ENCODE measurements at regions of chr11 and their contacts with region 1.

Region 1: GRCh38 chr11:116835791-116836631 is 1.4 kb downstream of the APOA1 start:
- DNase-seq: peak; percentile 95
- H3K4me3 Mint-ChIP-seq: peak overlapping the region; percentile 43
- H3K27ac Mint-ChIP-seq: no peak overlapping the region
- H3K4me1 Mint-ChIP-seq: no peaks in the 10 kb centered on the region
- H3K27me3 Mint-ChIP-seq: no peaks in the 10 kb centered on the region
- CTCF ChIP-seq: peak; percentile 67

Region 2: DNA sequence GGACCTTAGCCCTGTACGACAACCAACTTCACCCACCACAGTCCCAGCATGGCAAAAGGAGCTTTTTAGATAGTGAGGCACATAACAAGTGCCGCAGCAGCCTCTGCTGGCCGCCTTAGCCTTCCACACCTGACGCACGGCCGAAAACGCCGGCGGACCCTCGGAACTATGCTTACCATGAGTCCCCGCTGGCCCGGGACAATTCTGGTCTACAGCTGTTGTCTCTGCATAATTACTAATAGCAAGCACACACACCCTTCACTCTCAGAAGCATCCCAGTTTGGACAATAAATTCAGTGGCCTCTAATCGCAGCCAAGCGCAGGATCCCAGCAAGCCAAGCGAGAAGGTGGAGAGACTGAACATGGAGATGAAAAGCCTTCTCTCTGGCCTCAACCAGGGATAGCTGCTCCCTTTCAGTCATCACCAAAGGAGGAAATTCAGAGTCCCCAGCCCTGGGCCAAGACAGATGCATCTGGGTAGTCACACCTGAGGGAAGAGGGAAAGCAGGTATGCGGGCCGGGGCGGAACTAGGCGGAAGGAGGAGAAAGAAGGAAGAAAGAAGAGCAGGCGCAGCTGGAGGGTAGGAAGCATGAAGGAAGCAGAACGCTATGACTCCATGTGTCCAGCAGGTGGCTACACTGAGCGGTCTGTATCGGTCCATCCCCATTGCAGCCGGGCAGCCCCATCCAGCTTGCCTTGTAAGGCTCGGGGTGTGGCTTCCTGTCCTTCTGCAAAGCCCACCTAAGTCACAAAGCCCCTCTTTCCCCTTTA is 103.6 kb before region 1 on chr11:
- CTCF ChIA-PET with region 1: interaction called, 33 read pairs
- POLR2A ChIA-PET with region 1: interaction called, 3 read pairs
- intact Hi-C with region 1: loop called (anchors 2 kb)
- DNase-seq: peak; percentile 74
- H3K4me3 Mint-ChIP-seq: no peak overlapping the region
- H3K27ac Mint-ChIP-seq: no peak overlapping the region
- H3K4me1 Mint-ChIP-seq: peaks cover 7% of the 10 kb centered on the region
- H3K27me3 Mint-ChIP-seq: no peaks in the 10 kb centered on the region
- CTCF ChIP-seq: peak; percentile 87

Region 3: GRCh38 chr11:116742104-116742503 is 93.9 kb before region 1 on chr11:
- CTCF ChIA-PET with region 1: interaction called, 11 read pairs
- POLR2A ChIA-PET with region 1: no interaction called
- intact Hi-C with region 1: no loop called
- DNase-seq: no peak
- H3K4me3 Mint-ChIP-seq: no peak overlapping the region
- H3K27ac Mint-ChIP-seq: no peak overlapping the region
- H3K4me1 Mint-ChIP-seq: no peaks in the 10 kb centered on the region
- H3K27me3 Mint-ChIP-seq: no peaks in the 10 kb centered on the region
- CTCF ChIP-seq: no peak

Region 4: GRCh38 chr11:116772443-116773202 is 63.4 kb before region 1 on chr11 and contains the start of gene BUD13:
- CTCF ChIA-PET with region 1: interaction called, 12 read pairs
- POLR2A ChIA-PET with region 1: interaction called, 10 read pairs
- intact Hi-C with region 1: no loop called
- DNase-seq: peak; percentile 86
- H3K4me3 Mint-ChIP-seq: peak within 1 kb of the TSS; percentile 97
- H3K27ac Mint-ChIP-seq: peak within 1 kb of the TSS; percentile 98
- H3K4me1 Mint-ChIP-seq: peaks cover 25% of the 10 kb centered on the region
- H3K27me3 Mint-ChIP-seq: no peaks in the 10 kb centered on the region
- CTCF ChIP-seq: no peak
- total RNA-seq, gene BUD13: 11.8 and 15.1 TPM in 2 replicates

Region 5: DNA sequence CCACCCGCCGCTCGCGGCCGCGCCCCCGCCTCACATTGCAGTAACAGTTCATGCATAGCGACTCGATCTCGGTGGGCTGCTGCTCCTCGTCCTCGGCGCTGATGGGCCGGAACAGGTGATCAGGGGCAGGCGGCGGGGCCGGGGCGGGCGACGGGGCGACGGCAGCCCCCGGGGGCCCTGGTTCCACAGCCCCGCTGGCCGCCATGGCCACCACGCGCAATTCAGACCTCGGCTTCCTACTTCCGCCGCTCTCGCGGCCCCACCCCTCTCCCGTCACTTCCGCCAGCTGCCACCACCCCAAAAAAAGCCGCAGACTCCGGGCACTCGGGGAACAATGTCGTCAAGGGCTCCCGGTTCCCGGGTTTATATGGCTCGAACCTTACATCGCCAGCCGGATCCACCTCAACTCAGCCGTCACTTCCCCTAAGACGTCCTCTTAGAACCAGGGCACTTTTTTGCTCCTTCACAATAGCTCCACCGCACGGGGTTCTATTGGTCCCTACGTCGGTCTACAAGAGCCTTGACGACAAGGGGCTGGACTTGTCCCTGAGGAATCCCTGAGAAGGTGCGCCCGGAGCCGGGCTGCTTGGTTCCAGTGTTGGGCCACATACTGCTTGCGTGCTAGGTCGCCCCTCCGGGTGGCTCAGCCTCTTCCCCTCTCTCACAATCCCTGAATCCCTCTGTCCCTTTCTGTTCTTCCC is 48.1 kb before region 1 on chr11 and contains the start of gene ZPR1:
- CTCF ChIA-PET with region 1: interaction called, 124 read pairs
- POLR2A ChIA-PET with region 1: interaction called, 13 read pairs
- intact Hi-C with region 1: loop called (anchors 1 kb)
- DNase-seq: peak; percentile 58
- H3K4me3 Mint-ChIP-seq: peak within 1 kb of the TSS; percentile 92
- H3K27ac Mint-ChIP-seq: peak within 1 kb of the TSS; percentile 99
- H3K4me1 Mint-ChIP-seq: peaks cover 28% of the 10 kb centered on the region
- H3K27me3 Mint-ChIP-seq: no peaks in the 10 kb centered on the region
- CTCF ChIP-seq: no peak
- total RNA-seq, gene ZPR1: 82.5 and 105 TPM in 2 replicates

Region 6: GRCh38 chr11:116821050-116821918 is 14.7 kb before region 1 on chr11:
- CTCF ChIA-PET with region 1: interaction called, 16 read pairs
- POLR2A ChIA-PET with region 1: no interaction called
- intact Hi-C with region 1: no loop called
- DNase-seq: no peak
- H3K4me3 Mint-ChIP-seq: no peak overlapping the region
- H3K27ac Mint-ChIP-seq: no peak overlapping the region
- H3K4me1 Mint-ChIP-seq: no peaks in the 10 kb centered on the region
- H3K27me3 Mint-ChIP-seq: no peaks in the 10 kb centered on the region
- CTCF ChIP-seq: no peak

Region 7: GRCh38 chr11:116853461-116854073 is 17.6 kb after region 1 on chr11:
- CTCF ChIA-PET with region 1: interaction called, 24 read pairs
- POLR2A ChIA-PET with region 1: interaction called, 4 read pairs
- intact Hi-C with region 1: no loop called
- DNase-seq: peak; percentile 50
- H3K4me3 Mint-ChIP-seq: no peak overlapping the region
- H3K27ac Mint-ChIP-seq: no peak overlapping the region
- H3K4me1 Mint-ChIP-seq: peaks cover 18% of the 10 kb centered on the region
- H3K27me3 Mint-ChIP-seq: no peaks in the 10 kb centered on the region
- CTCF ChIP-seq: no peak